Activated CD4-positive, alpha-beta memory T cell treated with anti-CD3 and anti-CD28 coated beads, Interleukin-2, amount 10 ng/mL, durations not matched to agents 7 days and 5 days (primary cell): ENCODE measurements at regions of chr16 and their contacts with region 1.

Region 1: DNA sequence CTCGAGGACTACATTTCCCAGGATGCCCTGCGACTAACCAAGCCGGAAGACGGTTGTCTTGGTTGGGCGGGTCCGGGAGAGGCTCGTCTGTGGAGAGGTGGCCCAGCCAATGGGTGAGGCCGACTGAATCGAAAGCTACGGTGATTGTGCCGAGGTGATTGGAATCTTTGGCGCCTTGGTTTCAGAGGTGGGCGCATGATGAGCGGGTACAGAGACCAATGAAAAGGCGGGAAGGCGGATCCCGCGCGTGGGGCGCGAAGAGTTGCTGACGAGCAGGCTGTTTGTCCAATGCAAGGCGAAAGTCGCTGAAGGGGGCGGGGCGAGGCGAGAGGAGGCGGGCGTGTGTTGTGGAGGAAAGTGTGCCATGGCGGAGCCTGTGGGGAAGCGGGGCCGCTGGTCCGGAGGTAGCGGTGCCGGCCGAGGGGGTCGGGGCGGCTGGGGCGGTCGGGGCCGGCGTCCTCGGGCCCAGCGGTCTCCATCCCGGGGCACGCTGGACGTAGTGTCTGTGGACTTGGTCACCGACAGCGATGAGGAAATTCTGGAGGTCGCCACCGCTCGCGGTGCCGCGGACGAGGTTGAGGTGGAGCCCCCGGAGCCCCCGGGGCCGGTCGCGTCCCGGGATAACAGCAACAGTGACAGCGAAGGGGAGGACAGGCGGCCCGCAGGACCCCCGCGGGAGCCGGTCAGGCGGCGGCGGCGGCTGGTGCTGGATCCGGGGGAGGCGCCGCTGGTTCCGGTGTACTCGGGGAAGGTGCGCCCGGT is at the start of gene NFATC2IP:
- DNase-seq: peak; percentile 100
- H3K4me3 Mint-ChIP-seq: peak within 1 kb of the TSS; percentile 88
- H3K27ac Mint-ChIP-seq: peak within 1 kb of the TSS; percentile 88
- H3K4me1 Mint-ChIP-seq: peaks cover 37% of the 10 kb centered on the region
- H3K27me3 Mint-ChIP-seq: no peaks in the 10 kb centered on the region
- total RNA-seq, gene NFATC2IP: 96.7 TPM

Region 2: DNA sequence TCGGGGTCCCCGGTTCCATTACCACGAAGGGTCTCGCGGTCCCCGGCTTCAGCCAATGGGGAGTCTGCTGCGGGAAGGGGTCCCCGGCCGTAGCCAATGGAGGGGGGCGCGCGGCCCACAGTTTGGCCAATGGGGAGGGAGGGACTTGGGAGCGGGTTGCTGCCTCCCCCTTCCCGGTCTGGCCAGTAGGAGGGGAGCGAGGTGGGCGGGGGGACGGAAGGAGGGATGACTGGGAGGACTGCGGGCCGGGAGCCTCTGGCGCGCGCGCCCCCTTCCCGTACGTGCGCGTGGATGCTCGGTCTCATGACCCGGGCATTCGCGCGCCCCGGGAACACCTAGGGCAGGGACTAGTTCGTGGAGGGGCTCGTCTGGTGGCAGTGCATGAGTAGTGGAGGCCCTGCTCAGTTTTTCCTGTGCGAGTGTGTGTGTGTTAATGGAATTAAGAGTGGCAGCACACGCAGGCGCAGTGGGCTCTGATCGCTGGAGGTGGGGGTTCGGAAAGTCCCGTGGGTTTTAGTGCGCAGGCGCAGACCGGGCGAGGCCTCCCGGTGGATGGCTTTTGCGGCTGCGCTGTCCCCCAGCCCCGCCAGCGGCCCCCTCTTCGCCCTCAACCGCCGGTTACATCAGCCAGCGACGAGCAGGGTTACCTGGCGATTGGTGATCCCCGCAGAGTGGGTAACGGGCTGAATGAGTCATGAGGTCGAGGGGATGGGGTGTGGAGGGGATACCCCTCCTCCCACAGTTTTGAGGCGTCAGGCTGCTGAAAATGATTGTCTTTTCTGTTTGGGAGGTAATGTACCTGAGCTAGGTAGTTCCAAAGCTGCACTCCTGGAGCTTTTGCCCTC is 126.7 kb before region 1 on chr16:
- CTCF ChIA-PET with region 1: interaction called, 18 read pairs
- POLR2A ChIA-PET with region 1: interaction called, 22 read pairs
- DNase-seq: peak; percentile 96
- H3K4me3 Mint-ChIP-seq: peak overlapping the region; percentile 99
- H3K27ac Mint-ChIP-seq: peak overlapping the region; percentile 99
- H3K4me1 Mint-ChIP-seq: peaks cover 56% of the 10 kb centered on the region
- H3K27me3 Mint-ChIP-seq: no peaks in the 10 kb centered on the region

Region 3: DNA sequence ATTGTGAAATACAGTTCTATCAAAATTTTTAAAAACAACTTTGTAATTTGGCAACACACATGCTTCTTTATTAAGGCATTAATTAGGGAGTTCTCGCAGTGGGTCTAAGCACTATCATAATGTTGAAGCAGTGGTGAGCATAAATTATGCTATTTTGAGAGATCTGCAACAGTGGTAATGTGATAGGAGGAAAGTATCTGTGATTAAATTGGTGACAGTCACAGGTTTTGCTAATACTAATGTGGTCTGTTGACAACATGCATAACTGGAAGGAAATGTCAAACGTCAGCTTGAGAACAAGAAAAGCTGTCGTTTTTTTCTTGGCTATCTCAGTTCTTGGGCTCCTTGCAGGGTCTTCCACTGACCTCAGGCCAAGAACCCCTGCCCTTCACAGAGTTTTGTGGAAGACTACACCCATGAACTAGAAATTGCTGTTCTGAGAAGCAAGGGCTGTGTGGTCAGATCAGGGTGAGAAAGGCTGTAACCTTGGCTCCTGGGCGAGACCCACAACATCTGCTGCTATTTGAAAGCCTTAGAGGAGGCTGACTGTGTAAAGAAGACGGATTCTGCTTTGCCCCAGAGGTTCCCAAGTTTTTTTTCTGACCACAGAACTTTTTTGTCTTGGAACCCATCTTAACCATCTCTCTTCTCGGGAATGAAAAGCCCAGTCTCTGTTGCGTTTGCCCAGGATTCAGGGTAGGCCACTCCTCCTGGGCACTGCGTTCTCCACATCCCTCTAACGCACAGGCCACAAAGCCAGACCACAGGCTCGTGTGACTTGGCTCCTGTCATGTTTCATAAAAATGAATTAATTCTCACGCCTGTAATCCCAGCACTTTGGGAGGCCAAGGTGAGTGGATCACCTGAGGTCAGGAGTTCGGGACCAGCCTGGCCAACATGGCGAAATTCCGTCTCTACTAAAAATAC is 58.6 kb before region 1 on chr16:
- CTCF ChIA-PET with region 1: no interaction called
- POLR2A ChIA-PET with region 1: no interaction called
- DNase-seq: no peak
- H3K4me3 Mint-ChIP-seq: no peak overlapping the region
- H3K27ac Mint-ChIP-seq: no peak overlapping the region
- H3K4me1 Mint-ChIP-seq: no peaks in the 10 kb centered on the region
- H3K27me3 Mint-ChIP-seq: no peaks in the 10 kb centered on the region

Region 4: GRCh38 chr16:28924732-28925385 is 26.0 kb before region 1 on chr16 and contains the start of gene RABEP2:
- CTCF ChIA-PET with region 1: interaction called, 20 read pairs
- POLR2A ChIA-PET with region 1: interaction called, 10 read pairs
- DNase-seq: peak; percentile 95
- H3K4me3 Mint-ChIP-seq: peak within 1 kb of the TSS; percentile 97
- H3K27ac Mint-ChIP-seq: peak within 1 kb of the TSS; percentile 95
- H3K4me1 Mint-ChIP-seq: peaks cover 20% of the 10 kb centered on the region
- H3K27me3 Mint-ChIP-seq: no peaks in the 10 kb centered on the region
- total RNA-seq, gene RABEP2: 15.7 to 16.5 TPM

Region 5: GRCh38 chr16:28935924-28936783 is 14.7 kb before region 1 on chr16:
- CTCF ChIA-PET with region 1: interaction called, 37 read pairs
- POLR2A ChIA-PET with region 1: interaction called, 3 read pairs
- DNase-seq: peak; percentile 85
- H3K4me3 Mint-ChIP-seq: peak overlapping the region; percentile 58
- H3K27ac Mint-ChIP-seq: no peak overlapping the region
- H3K4me1 Mint-ChIP-seq: peaks cover 16% of the 10 kb centered on the region
- H3K27me3 Mint-ChIP-seq: peaks cover 2% of the 10 kb centered on the region

Region 6: DNA sequence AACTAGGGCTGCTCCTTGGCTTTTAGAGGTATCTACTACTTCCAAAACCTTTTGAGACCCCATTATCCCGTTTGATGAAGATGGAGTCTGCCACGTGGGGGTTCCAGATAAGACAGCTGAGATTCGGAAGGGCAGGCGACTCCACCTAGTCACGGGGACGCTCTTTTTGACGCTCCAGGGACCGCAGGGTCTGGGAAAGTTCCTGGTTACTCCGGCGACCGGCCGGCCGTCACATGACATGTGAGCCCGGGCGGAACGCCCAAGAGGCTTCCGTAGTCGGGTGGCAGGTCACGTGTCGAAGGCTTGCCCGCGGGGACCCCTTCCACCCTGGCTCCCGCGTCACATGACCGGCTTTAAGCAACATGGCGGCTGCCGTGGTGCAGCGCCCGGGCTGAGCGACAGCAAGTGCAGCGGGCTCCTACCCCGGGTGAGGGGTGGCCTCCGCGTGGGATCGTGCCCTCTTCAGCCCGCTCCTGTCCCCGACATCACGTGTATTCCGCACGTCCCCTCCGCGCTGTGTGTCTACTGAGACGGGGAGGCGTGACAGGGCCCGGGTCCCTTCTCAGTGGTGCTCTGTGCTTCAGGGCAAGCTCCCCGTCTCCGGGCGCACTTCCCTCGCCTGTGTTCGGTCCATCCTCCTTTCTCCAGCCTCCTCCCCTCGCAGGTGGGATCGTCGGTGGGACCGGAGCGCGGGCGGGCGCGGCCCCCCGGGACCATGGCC is 23.8 kb after region 1 on chr16 and contains the start of gene SPNS1:
- CTCF ChIA-PET with region 1: interaction called, 8 read pairs
- POLR2A ChIA-PET with region 1: interaction called, 20 read pairs
- DNase-seq: peak; percentile 95
- H3K4me3 Mint-ChIP-seq: peak within 1 kb of the TSS; percentile 80
- H3K27ac Mint-ChIP-seq: peak within 1 kb of the TSS; percentile 78
- H3K4me1 Mint-ChIP-seq: peaks cover 40% of the 10 kb centered on the region
- H3K27me3 Mint-ChIP-seq: no peaks in the 10 kb centered on the region
- total RNA-seq, gene SPNS1: 20.6 to 24.7 TPM

Region 7: GRCh38 chr16:28999577-28999976 is 48.7 kb after region 1 on chr16:
- CTCF ChIA-PET with region 1: no interaction called
- POLR2A ChIA-PET with region 1: no interaction called
- DNase-seq: no peak
- H3K4me3 Mint-ChIP-seq: no peak overlapping the region
- H3K27ac Mint-ChIP-seq: no peak overlapping the region
- H3K4me1 Mint-ChIP-seq: peaks cover 4% of the 10 kb centered on the region
- H3K27me3 Mint-ChIP-seq: no peaks in the 10 kb centered on the region